Activated CD8-positive, alpha-beta T cell treated with anti-CD3 and anti-CD28 coated beads, Interleukin-2, amount 10 ng/mL, durations not matched to agents 7 days and 5 days (primary cell): ENCODE measurements at regions of chr1 and their contacts with region 1.

Region 1: DNA sequence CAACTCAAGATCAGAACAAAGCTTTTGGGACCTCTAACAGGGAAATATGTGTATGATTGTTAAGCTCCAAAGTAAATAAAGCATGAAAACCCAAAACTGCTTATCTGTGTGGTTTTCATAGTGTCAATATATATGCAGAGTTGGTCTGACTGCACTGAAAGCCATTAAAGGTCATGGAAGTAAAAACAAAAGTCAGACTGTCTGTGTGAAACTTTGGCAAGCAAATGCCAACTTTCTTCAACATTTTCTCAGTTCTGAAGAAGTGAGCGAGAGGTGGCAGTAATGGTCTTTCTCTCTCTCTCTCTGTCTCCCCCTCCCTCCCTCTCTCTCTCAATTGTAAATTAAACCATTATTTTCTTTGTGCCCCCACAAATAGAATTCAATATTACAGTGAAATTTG is 100.1 kb upstream of the S1PR1 start:
- DNase-seq: peak; percentile 56
- ATAC-seq: peak; percentile 73
- H3K4me3 Mint-ChIP-seq: peak overlapping the region; percentile 42
- H3K27ac Mint-ChIP-seq: peak overlapping the region; percentile 83
- H3K4me1 Mint-ChIP-seq: peaks cover 67% of the 10 kb centered on the region
- H3K27me3 Mint-ChIP-seq: no peaks in the 10 kb centered on the region

Region 2: GRCh38 chr1:100921109-100921706 is 215.5 kb before region 1 on chr1:
- CTCF ChIA-PET with region 1: interaction called, 10 read pairs
- POLR2A ChIA-PET with region 1: no interaction called
- DNase-seq: no peak
- ATAC-seq: no peak
- H3K4me3 Mint-ChIP-seq: no peak overlapping the region
- H3K27ac Mint-ChIP-seq: no peak overlapping the region
- H3K4me1 Mint-ChIP-seq: peaks cover 26% of the 10 kb centered on the region
- H3K27me3 Mint-ChIP-seq: no peaks in the 10 kb centered on the region

Region 3: GRCh38 chr1:101013776-101014175 is 123.0 kb before region 1 on chr1:
- CTCF ChIA-PET with region 1: no interaction called
- POLR2A ChIA-PET with region 1: no interaction called
- DNase-seq: no peak
- ATAC-seq: no peak
- H3K4me3 Mint-ChIP-seq: no peak overlapping the region
- H3K27ac Mint-ChIP-seq: no peak overlapping the region
- H3K4me1 Mint-ChIP-seq: no peaks in the 10 kb centered on the region
- H3K27me3 Mint-ChIP-seq: no peaks in the 10 kb centered on the region

Region 4: GRCh38 chr1:101101362-101101761 is 35.4 kb before region 1 on chr1:
- CTCF ChIA-PET with region 1: no interaction called
- POLR2A ChIA-PET with region 1: no interaction called
- DNase-seq: no peak
- ATAC-seq: no peak
- H3K4me3 Mint-ChIP-seq: no peak overlapping the region
- H3K27ac Mint-ChIP-seq: no peak overlapping the region
- H3K4me1 Mint-ChIP-seq: peaks cover 4% of the 10 kb centered on the region
- H3K27me3 Mint-ChIP-seq: no peaks in the 10 kb centered on the region

Region 5: DNA sequence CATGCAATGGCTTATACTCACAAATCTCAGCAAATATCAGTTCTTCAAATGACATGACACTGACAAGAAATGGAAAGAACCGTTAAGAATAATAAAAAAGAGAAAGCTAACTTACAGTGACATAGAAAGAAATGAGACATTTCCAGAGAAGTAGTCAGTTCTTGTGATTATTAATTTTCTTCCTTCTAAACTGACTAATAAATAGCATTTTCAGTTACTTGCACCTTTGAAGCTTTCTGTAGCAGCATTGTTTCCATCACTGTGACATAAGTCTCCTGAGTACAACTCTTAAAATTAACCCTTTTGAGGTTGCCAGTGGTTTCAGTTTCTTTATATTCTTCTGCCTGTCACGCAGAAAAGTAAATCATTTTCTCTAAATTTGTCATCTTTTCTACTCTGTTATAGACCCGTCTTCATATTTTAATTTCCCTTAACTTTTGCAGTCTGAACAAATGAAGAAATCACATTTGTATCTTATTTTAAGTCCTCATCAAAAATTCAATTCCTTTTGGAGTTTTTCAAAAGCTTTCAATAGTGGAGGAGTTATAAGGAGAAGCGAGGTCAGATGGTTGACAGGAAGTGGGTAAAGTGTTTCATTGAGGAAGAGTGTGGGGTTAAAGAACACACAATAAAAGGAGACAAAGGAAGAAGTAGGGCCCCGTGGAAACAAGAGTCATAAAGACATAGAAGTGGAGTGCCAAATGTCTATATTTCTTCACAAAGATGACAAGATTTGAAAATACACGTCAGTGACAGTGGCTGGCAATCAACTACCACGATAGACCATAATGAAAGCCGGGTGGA is 42.2 kb after region 1 on chr1:
- CTCF ChIA-PET with region 1: interaction called, 23 read pairs
- POLR2A ChIA-PET with region 1: interaction called, 7 read pairs
- DNase-seq: peak; percentile 60
- ATAC-seq: peak; percentile 86
- H3K4me3 Mint-ChIP-seq: peak overlapping the region; percentile 81
- H3K27ac Mint-ChIP-seq: peak overlapping the region; percentile 97
- H3K4me1 Mint-ChIP-seq: peaks cover 61% of the 10 kb centered on the region
- H3K27me3 Mint-ChIP-seq: no peaks in the 10 kb centered on the region

Region 6: GRCh38 chr1:101247404-101248287 is 110.9 kb after region 1 on chr1:
- CTCF ChIA-PET with region 1: interaction called, 13 read pairs
- POLR2A ChIA-PET with region 1: interaction called, 4 read pairs
- DNase-seq: peak; percentile 11
- ATAC-seq: no peak
- H3K4me3 Mint-ChIP-seq: no peak overlapping the region
- H3K27ac Mint-ChIP-seq: no peak overlapping the region
- H3K4me1 Mint-ChIP-seq: peaks cover 22% of the 10 kb centered on the region
- H3K27me3 Mint-ChIP-seq: no peaks in the 10 kb centered on the region